MCF 10A (cell line): ENCODE measurements at regions of chr9 and their contacts with region 1.

Region 1: GRCh38 chr9:6907772-6908381 is 150.1 kb downstream of the KDM4C start:
- DNase-seq: peak; percentile 52
- H3K4me3 Mint-ChIP-seq: no peak overlapping the region
- H3K27ac Mint-ChIP-seq: no peak overlapping the region
- H3K4me1 Mint-ChIP-seq: no peaks in the 10 kb centered on the region
- H3K27me3 Mint-ChIP-seq: no peaks in the 10 kb centered on the region
- CTCF ChIP-seq: peak; percentile 62

Region 2: DNA sequence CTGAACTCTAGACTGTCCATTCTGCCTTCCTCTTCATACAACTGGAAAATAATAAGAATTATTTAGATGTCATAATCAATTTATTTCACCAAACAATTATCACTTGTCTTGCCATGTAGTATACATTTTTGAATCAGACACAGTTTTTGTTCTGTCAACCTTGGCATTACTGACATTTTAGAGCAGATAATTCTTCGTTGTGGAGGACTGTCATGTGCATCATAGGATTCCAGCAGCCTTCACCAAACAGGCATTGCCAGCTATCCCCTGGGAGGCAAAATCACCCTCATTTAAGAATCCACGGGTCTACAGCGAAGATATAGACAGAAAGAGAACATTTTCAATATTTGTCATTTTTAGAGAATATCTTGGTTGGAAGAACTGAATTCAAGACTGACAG is 143.8 kb after region 1 on chr9:
- CTCF ChIA-PET with region 1: interaction called, 7 read pairs
- POLR2A ChIA-PET with region 1: interaction called, 3 read pairs
- intact Hi-C with region 1: loop called (anchors 1 kb)
- DNase-seq: no peak
- H3K4me3 Mint-ChIP-seq: no peak overlapping the region
- H3K27ac Mint-ChIP-seq: no peak overlapping the region
- H3K4me1 Mint-ChIP-seq: peaks cover 6% of the 10 kb centered on the region
- H3K27me3 Mint-ChIP-seq: no peaks in the 10 kb centered on the region
- CTCF ChIP-seq: no peak

Region 3: DNA sequence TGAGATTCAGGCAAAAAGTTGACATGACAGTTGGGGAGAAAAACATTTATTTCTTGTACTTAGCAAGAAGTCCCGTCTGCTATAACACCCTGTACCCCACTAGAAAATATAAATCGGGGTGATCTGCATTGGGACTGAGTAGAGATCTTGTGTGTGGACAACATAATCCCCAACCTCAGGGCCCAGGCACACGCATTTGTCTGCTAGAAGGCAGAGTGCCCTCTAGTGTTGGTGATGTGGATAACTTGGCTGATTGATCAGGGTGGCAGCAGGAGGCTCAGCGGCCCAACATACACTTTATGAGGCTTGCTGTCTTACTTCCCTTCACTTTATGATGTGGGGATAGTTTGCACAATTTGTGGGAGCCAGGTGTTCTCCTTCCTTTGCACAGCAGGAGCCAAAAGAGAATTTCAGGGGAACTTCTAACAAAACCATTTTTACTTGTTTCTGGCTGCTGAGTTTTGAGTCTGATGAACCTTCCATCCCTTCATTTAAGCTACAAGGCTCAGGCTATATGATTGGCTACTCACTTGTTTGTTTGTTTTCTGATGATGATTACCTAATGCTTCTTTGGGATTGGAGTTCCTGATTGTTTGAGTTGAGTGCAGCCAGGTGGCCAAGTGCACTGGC is 628.5 kb after region 1 on chr9:
- CTCF ChIA-PET with region 1: interaction called, 4 read pairs
- POLR2A ChIA-PET with region 1: no interaction called
- intact Hi-C with region 1: loop called (anchors 2 kb)
- DNase-seq: peak; percentile 75
- H3K4me3 Mint-ChIP-seq: no peak overlapping the region
- H3K27ac Mint-ChIP-seq: no peak overlapping the region
- H3K4me1 Mint-ChIP-seq: no peaks in the 10 kb centered on the region
- H3K27me3 Mint-ChIP-seq: peaks cover 19% of the 10 kb centered on the region
- CTCF ChIP-seq: peak; percentile 68